ENCODE measurements at regions of chr3 and their contacts with region 1.

Region 1: DNA sequence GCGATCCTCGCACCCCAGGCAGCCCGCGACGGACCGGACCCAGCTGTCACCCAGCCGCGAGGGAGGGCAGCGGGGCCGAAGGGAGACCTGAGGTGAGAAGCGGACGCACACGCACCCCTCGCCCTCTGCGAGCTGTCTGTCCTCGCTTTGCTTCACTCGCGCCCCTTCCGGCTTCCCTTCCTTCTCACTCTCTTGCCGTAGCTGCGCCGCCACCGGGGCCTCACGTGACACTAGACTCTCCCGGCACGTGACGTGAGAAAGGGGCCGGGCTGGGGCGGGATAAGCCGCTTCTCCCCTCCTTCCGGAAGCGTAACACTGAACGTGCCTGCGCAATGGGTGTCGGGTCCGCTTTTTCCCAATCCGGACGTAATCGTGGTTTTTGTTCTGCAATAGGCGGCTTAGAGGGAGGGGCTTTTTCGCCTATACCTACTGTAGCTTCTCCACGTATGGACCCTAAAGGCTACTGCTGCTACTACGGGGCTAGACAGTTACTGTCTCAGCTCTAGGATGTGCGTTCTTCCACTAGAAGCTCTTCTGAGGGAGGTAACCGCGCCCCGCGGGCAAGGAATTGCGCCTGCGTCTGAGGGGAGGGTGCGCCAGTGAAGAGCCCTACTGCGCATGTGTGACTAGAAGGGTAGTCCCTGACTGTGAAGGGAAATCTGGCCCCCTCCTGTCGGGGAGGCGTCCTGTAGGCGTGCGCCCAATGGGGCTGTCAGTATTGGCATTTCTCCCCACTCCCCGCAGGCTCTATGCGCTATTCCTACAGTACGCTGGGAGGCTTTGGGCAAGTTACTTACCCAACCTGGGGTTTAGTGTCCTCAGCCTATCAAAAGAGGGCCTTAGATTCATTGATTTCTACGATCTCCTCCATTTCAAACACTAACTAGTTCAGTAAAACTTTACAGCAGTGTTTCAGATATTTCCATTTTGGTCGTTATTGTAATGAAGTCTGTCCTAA is at the starts of genes ATG3 and SLC35A5:
- DNase-seq: peak; percentile 99
- H3K4me3 ChIP-seq: peak within 1 kb of the TSS; percentile 89 to 98
- H3K27ac ChIP-seq: peak within 1 kb of the TSS; percentile 95
- H3K4me1 ChIP-seq: peaks cover 48% of the 10 kb centered on the region
- H3K27me3 ChIP-seq: no peaks in the 10 kb centered on the region
- CTCF ChIP-seq: no peak
- POLR2A ChIP-seq: peak in 1 of 2 donors; percentile 46
- total RNA-seq, gene ATG3: 56.5 TPM
- total RNA-seq, gene SLC35A5: 12.8 TPM

Region 2: DNA sequence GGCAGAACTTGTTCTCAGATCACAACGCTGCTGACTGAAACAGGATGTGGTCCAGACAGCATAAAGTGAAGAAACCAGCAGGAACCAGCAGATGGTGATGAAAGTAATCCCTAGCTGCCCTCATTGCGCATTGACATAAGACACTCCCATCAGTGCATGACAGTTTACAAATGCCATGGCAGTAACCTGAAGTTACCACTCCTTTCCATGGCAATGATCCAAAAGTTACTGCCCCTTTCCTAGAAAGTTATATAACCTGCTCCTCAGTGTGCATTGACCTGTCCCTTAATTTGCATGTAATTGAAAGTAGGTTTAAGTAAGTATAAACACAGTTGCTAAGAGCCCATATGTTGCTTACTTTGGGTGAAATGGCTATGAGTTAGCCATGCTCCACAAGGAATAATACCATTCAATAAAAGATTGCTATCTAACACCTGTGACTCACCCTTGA is 1169.1 kb before region 1 on chr3:
- intact Hi-C with region 1: no loop called
- DNase-seq: no peak
- H3K4me3 ChIP-seq: no peak overlapping the region
- H3K27ac ChIP-seq: no peak overlapping the region
- H3K4me1 ChIP-seq: no peaks in the 10 kb centered on the region
- H3K27me3 ChIP-seq: no peaks in the 10 kb centered on the region
- CTCF ChIP-seq: no peak
- POLR2A ChIP-seq: no peak

Region 3: DNA sequence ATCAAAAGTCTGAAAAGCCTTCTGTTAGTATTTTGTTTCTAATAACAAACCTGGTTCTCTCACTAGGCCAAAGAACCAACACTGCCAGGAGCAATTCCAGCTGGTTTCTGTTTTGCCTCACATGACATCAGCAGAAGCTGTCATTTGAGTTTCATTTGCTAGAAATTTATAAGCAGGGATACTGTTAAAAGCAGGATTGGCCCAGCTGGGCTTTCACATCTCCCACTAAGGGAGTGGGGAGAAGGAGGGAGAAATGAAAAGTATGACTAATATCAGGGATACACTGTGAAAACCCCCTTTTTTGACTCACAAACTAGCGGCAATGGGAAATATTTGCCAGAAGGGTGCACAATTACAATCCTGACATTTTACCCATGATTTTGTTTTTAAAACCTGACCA is 73.7 kb after region 1 on chr3:
- intact Hi-C with region 1: loop called (anchors 10 kb)
- DNase-seq: no peak
- H3K4me3 ChIP-seq: peak overlapping the region; percentile 36 to 48
- H3K27ac ChIP-seq: peak overlapping the region; percentile 87
- H3K4me1 ChIP-seq: peaks cover 49% of the 10 kb centered on the region
- H3K27me3 ChIP-seq: no peaks in the 10 kb centered on the region
- CTCF ChIP-seq: no peak
- POLR2A ChIP-seq: no peak